HCT116 (cell line): ENCODE measurements at regions of chr5 and their contacts with region 1.

Region 1: GRCh38 chr5:68331192-68332079 is 115.9 kb downstream of the PIK3R1 start:
- DNase-seq: no peak
- ATAC-seq: no peak
- H3K4me3 ChIP-seq: no peak overlapping the region
- H3K27ac ChIP-seq: no peak overlapping the region
- H3K4me1 ChIP-seq: peaks cover 27 to 61% of the 10 kb centered on the region in 2 experiments
- H3K27me3 ChIP-seq: no peaks in the 10 kb centered on the region
- CTCF ChIP-seq: no peak
- POLR2A ChIP-seq: no peak
- RAD21 ChIP-seq: no peak

Region 2: GRCh38 chr5:67896311-67896929 is 435.0 kb before region 1 on chr5:
- CTCF ChIA-PET with region 1: no interaction called
- POLR2A ChIA-PET with region 1: no interaction called
- RAD21 ChIA-PET with region 1: no interaction called
- intact Hi-C with region 1: no loop called
- DNase-seq: no peak
- ATAC-seq: no peak
- H3K4me3 ChIP-seq: no peak overlapping the region
- H3K27ac ChIP-seq: no peak overlapping the region
- H3K4me1 ChIP-seq: no peaks in the 10 kb centered on the region
- H3K27me3 ChIP-seq: peaks cover 8% of the 10 kb centered on the region; the same call in 1 of the 2 replicates
- CTCF ChIP-seq: no peak
- POLR2A ChIP-seq: no peak
- RAD21 ChIP-seq: no peak

Region 3: DNA sequence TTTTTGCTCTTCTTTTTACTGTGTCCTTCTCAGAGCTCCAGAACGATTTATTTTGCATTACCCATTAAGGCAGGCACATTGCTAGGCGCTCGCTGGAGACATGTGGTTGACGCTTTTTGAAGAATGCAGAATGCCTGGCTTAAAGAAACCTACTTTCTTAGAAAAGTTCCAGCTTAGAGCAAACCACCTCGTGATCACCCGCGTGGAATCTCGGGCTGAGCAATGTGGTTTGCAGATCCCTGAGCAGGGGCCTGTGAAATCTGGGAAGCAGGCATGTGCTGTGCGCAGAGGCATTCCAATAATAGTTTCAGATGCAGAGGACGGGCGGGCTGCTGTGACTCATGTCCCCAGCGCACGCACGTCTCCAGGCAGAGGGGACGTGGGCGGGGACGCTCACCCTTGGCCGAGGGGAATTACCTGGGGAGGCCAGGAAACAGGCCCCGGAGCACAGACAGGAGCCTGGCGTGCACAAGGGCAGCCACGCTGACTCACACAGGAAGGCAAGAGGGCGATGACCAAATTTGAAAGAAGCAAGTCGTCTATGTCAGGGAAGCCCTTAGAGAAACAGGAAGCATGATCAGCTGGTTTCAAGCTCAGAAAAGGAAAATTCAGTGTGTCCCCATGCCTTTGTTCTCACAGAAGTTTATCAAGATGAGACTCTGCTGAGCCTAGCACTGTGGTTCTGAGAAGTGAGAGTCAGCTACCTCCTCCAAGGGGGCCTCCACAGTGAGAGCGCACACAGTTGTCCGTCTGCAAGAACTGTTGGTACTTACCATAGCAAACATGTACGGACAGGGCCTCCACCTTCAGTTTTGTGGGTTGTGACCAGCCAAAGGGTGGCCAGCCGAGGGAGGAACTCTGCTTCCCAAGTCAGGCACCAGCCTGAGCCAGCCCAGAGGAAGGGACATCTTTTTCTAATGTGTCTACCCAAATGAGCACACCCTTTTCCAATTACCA is 102.8 kb after region 1 on chr5:
- CTCF ChIA-PET with region 1: no interaction called
- POLR2A ChIA-PET with region 1: no interaction called
- RAD21 ChIA-PET with region 1: no interaction called
- intact Hi-C with region 1: loop called (anchors 5 kb)
- DNase-seq: peak; percentile 90
- ATAC-seq: peak; percentile 97
- H3K4me3 ChIP-seq: peak overlapping the region in 1 of 2 experiments; percentile 1; a peak in 1 of 4 replicates
- H3K27ac ChIP-seq: peak overlapping the region; percentile 66
- H3K4me1 ChIP-seq: peaks cover 24 to 42% of the 10 kb centered on the region in 2 experiments
- H3K27me3 ChIP-seq: no peaks in the 10 kb centered on the region
- CTCF ChIP-seq: no peak
- POLR2A ChIP-seq: no peak
- RAD21 ChIP-seq: peak; percentile 22

Region 4: DNA sequence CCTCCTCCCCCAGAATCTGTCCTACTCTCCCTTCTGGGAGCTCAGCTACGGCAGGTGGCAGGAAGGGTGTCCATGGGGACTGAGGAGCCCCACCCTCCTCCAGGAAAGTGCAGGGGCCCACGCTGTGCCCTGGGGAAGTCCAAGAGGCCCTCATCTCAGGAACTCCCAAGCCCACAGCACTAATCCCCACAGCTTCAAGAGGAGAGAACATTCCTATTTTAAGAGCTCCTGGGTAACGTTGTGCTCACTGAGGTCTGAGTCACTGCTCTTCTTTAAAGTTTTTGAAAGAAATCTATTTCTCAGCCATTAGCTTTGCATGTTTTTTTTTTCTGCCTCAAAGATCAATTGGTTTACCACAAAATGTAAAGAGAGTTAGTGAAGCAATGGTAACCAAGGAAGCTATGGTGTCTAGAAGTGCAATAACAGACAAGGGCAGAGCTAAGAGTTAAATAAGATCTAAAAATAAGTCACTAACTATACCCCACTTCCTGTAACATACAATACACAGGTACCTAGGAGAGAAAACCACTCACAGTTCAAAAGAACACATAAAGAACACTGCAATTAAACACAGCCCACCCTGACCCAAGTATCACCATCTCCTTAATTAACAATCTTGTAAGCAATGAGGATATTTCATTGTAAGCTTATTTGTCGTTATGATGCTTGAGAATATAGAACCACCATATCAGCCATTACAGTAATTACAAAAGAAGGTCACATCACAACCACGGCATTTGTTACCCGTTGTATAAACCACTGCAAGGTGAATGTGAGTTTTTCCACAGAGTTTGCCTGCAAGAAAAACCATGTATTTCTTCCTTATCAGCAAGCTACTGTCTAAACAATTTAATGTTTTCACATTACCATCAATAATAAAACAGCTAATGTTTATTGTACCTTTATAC is 380.1 kb after region 1 on chr5:
- CTCF ChIA-PET with region 1: no interaction called
- POLR2A ChIA-PET with region 1: no interaction called
- RAD21 ChIA-PET with region 1: no interaction called
- intact Hi-C with region 1: no loop called
- DNase-seq: no peak
- ATAC-seq: no peak
- H3K4me3 ChIP-seq: no peak overlapping the region
- H3K27ac ChIP-seq: no peak overlapping the region
- H3K4me1 ChIP-seq: no peaks in the 10 kb centered on the region
- H3K27me3 ChIP-seq: no peaks in the 10 kb centered on the region
- CTCF ChIP-seq: no peak
- POLR2A ChIP-seq: no peak
- RAD21 ChIP-seq: no peak

Region 5: DNA sequence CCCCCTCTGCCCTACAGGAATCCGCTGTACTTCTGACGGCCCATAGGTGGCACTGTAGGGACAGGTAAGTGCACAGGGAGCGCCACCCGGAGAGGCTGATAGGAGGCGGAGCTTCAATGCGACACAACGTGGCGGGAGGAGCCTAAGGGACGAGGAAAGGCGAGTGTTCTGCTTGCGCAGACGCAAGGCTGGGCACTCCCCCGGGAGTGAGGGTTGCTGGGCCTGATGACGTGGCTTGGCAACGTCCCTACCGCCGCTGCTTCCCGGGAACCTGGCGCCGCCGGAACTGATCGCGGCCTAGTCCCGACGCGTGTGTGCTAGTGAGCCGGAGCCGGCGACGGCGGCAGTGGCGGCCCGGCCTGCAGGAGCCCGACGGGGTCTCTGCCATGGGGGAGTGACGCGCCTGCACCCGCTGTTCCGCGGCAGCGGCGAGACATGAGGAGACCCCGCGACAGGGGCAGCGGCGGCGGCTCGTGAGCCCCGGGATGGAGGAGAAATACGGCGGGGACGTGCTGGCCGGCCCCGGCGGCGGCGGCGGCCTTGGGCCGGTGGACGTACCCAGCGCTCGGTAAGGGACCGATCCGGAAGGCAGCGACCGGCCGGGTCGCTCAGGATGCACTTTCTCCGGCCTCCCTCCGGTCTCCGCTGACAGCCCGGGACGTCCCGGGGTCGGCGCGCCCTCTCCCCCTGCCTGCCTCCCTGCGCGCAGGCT is 762.5 kb after region 1 on chr5 and contains the start of gene SLC30A5:
- CTCF ChIA-PET with region 1: no interaction called
- POLR2A ChIA-PET with region 1: no interaction called
- RAD21 ChIA-PET with region 1: no interaction called
- intact Hi-C with region 1: no loop called
- DNase-seq: peak; percentile 99
- ATAC-seq: peak; percentile 100
- H3K4me3 ChIP-seq: peak within 1 kb of the TSS; percentile 72 to 95
- H3K27ac ChIP-seq: peak within 1 kb of the TSS; percentile 83
- H3K4me1 ChIP-seq: peaks cover 0 to 14% of the 10 kb centered on the region in 2 experiments; a peak in 1 of 4 replicates
- H3K27me3 ChIP-seq: no peaks in the 10 kb centered on the region
- CTCF ChIP-seq: peak; percentile 74 to 88 (median 80); a peak in 5 of 6 replicates
- POLR2A ChIP-seq: peak; percentile 77
- RAD21 ChIP-seq: peak; percentile 97
- total RNA-seq, gene SLC30A5: 50.0 TPM